ENCODE measurements at regions of chr6 and their contacts with region 1.

Region 1: DNA sequence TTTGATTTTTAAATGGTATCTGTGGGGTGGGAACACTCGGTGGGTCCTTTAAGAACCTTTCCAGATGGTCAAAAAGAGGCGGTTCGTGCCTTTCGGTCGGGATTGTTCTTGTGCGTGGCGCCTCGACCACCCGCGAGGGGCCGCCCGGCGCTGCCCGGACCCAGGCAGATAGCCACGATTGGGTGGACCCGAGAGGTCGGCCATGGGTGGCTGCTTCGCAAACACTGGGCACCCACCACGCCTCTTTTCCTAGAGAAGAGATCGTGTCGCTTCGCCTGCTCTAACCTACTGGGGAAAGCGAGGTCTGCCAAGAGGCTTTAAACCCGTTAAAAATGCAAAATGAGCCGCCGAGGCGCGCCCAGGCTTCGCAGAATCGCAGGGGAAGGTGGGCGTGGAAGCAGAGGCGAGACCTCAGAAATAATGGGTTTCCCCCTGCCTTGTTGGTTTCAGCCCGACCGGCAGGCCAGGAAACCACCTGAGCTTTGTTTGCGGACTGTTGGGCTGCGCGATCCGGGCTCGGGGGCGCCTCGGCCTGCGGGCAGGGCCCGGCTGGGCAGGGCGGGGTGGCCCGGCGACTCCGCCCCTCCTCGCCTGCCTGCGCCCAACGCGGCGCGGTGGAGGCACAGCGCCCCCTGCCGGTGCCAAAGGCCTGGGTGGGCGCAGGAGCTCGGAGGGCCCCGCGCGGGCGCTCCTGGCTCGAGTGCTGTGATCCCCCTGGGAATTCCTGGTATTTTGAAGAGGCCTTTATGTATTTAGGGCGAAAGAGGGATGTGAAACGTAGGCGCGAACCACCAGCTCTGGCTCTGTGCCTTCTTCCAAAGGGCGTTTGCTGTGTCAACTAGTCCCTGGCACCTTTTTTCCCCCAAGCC is 1.6 kb downstream of the MARCKS start:
- DNase-seq: peak; percentile 90 to 94
- H3K4me3 ChIP-seq: peak overlapping the region; percentile 100
- H3K27ac ChIP-seq: peak overlapping the region; percentile 98
- H3K4me1 ChIP-seq: peaks cover 37% of the 10 kb centered on the region
- H3K27me3 ChIP-seq: no peaks in the 10 kb centered on the region
- CTCF ChIP-seq: peak; percentile 97

Region 2: DNA sequence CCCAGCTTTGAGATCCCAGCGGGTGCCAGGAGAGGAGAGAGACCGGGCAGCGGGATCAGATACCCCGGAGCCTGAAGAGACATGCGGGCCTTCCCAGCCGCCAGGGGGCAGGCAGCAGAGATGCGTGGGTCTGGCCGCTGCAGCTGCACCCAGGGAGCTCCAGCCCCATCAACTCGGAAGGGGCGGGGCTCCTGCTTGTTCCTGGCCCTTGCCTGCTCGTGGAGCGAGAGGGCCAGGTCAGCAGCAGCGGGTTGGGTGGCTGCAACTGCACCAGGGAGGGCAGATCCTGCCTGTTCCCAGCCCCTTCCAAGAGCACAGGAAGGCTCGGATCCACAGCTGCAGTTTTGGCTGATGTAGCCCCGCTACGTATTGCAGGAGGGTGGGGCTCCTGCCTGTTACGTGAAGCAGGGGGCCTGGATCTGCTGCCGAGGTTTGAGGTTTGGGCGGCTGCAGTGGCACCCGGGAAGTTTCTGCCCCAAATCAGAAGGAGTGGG is 978.7 kb before region 1 on chr6:
- CTCF ChIA-PET with region 1: no interaction called
- POLR2A ChIA-PET with region 1: no interaction called
- intact Hi-C with region 1: loop called (anchors 5 kb)
- DNase-seq: peak; percentile 53 to 61
- H3K4me3 ChIP-seq: peak overlapping the region; percentile 47
- H3K27ac ChIP-seq: peak overlapping the region; percentile 26
- H3K4me1 ChIP-seq: no peaks in the 10 kb centered on the region
- H3K27me3 ChIP-seq: no peaks in the 10 kb centered on the region
- CTCF ChIP-seq: peak; percentile 54

Region 3: DNA sequence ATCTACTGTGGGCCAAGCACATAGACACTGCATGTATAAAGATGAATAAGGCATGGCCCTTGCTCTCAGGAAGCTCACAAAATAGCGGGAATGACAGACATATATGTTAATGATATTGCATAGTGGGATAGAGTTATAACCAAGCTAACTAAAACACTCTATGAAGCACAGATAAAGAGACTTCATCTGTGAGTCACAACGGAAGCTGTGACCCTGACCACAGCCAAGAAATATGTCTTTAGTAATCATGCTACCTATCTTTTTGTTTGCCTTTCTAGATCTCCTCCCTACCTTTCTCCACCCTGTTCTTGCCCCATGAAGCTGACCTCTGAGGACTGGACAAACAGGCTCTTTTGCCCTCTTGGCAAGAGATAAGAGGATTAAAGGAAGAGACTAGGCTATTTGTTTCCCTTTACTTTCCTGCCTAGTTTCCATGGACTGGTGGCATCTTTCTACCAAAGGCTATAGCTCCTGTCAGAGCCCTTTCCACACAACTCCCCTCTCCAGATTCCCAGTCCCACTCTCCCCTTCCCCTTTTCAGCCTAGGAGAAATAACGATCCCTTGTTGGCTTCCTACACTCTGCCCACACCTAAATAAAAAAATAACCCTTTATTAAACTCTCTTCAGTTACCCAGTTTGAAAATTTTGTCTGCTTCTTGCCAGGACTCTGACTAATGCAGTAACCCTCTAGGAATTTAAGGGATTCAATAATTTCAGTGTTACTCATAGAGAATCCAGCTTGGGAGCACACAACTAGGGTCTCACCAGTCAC is 506.5 kb before region 1 on chr6:
- CTCF ChIA-PET with region 1: no interaction called
- POLR2A ChIA-PET with region 1: no interaction called
- intact Hi-C with region 1: loop called (anchors 1 kb)
- DNase-seq: peak; percentile 77 to 100
- H3K4me3 ChIP-seq: peak overlapping the region; percentile 27
- H3K27ac ChIP-seq: peak overlapping the region; percentile 94
- H3K4me1 ChIP-seq: peaks cover 59% of the 10 kb centered on the region
- H3K27me3 ChIP-seq: no peaks in the 10 kb centered on the region
- CTCF ChIP-seq: no peak

Region 4: DNA sequence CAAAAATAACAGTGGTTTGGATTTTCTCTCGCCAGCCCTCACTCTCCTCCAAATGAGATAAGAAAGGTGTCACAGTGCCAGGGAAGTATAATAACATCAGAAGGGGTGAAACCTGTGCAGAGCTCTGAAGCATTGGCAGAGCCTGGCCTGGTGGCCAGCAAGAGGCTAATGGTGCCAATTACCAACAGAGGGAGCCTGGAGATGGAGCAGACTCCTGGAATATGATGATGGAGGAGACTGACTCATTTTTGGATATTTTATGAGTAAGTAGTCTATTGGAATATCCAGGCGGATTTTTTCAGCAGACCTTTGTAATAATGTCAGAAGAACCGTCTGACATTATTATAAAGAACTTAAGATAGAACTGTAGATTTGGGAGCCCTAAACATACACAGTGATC is 444.2 kb before region 1 on chr6:
- CTCF ChIA-PET with region 1: interaction called, 4 read pairs
- POLR2A ChIA-PET with region 1: no interaction called
- intact Hi-C with region 1: loop called (anchors 1 kb)
- DNase-seq: peak; percentile 35 to 66
- H3K4me3 ChIP-seq: no peak overlapping the region
- H3K27ac ChIP-seq: no peak overlapping the region
- H3K4me1 ChIP-seq: peaks cover 30% of the 10 kb centered on the region
- H3K27me3 ChIP-seq: no peaks in the 10 kb centered on the region
- CTCF ChIP-seq: peak; percentile 67; the same call in 1 of the 2 replicates

Region 5: GRCh38 chr6:113558966-113559365 is 299.7 kb before region 1 on chr6:
- CTCF ChIA-PET with region 1: no interaction called
- POLR2A ChIA-PET with region 1: interaction called, 6 read pairs
- intact Hi-C with region 1: loop called (anchors 2 kb)
- DNase-seq: peak in 1 of 2 experiments; percentile 77
- H3K4me3 ChIP-seq: peak overlapping the region; percentile 11; the same call in 1 of the 2 replicates
- H3K27ac ChIP-seq: peak overlapping the region; percentile 55
- H3K4me1 ChIP-seq: peaks cover 34% of the 10 kb centered on the region
- H3K27me3 ChIP-seq: no peaks in the 10 kb centered on the region
- CTCF ChIP-seq: no peak

Region 6: GRCh38 chr6:113684382-113684901 is 174.3 kb before region 1 on chr6:
- CTCF ChIA-PET with region 1: no interaction called
- POLR2A ChIA-PET with region 1: no interaction called
- intact Hi-C with region 1: loop called (anchors 1 kb)
- DNase-seq: peak; percentile 29 to 98
- H3K4me3 ChIP-seq: no peak overlapping the region
- H3K27ac ChIP-seq: peak overlapping the region; percentile 91
- H3K4me1 ChIP-seq: peaks cover 28% of the 10 kb centered on the region
- H3K27me3 ChIP-seq: no peaks in the 10 kb centered on the region
- CTCF ChIP-seq: no peak

Region 7: GRCh38 chr6:113909234-113909856 is 50.6 kb after region 1 on chr6:
- CTCF ChIA-PET with region 1: no interaction called
- POLR2A ChIA-PET with region 1: no interaction called
- intact Hi-C with region 1: loop called (anchors 2 kb)
- DNase-seq: peak; percentile 5 to 57
- H3K4me3 ChIP-seq: no peak overlapping the region
- H3K27ac ChIP-seq: no peak overlapping the region
- H3K4me1 ChIP-seq: 0 out of 2 replicates have a peak, but pooled peaks cover 7% of the 10 kb centered on the region
- H3K27me3 ChIP-seq: no peaks in the 10 kb centered on the region
- CTCF ChIP-seq: peak; percentile 99

Measured in PC-9 (cell line).